Activated CD4-positive, alpha-beta memory T cell treated with anti-CD3 and anti-CD28 coated beads for 36 hours (primary cell): ENCODE measurements at regions of chr19 and their contacts with region 1.

Region 1: GRCh38 chr19:43438291-43439096 is 23.8 kb downstream of the TEX101 start:
- DNase-seq: peak; percentile 51
- H3K4me3 Mint-ChIP-seq: no peak overlapping the region
- H3K27ac Mint-ChIP-seq: peak overlapping the region; percentile 71
- H3K4me1 Mint-ChIP-seq: peaks cover 34% of the 10 kb centered on the region
- H3K27me3 Mint-ChIP-seq: no peaks in the 10 kb centered on the region

Region 2: DNA sequence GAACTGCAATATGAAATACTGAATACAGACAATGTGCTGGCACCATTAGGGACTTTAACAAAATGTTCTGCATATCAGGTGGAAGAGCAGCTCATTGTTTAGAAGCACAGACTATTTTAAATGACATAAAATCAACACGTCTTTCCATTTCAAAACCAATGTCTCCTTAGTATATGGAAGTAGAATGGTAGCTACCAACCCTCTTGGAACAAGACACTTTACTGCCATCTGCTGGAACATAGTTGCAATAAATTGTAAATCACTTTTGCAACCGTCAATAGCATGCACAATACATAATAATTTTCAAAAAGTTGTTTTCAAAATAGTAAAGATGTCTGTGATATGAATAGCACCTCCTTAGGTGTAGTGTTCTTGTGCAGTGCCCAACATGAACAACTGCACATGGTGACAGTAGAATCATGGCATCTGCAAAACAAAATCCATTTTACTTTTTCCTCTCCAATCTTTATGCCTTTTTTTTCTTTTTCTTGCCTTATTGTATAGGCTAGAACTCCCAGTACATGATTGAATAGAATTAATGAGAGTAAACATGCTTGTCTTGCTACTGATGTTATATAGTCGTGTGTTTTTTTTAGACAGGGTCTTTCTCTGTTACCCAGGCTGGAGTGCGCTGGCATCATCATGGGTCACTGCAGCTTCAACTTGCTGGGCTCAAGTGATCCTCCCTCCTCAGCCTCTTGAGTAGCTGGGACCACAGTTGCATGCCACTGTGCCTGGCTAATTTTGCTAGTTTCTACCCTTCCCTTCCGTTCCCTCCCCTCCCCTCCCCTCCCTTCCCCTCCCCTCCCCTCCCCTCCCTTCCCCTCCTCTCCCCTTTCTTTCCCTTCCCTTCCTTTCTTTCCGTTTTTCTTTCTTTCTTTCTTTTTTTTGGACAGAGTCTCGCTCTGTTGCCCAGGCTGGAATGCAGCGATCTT is 371.5 kb after region 1 on chr19:
- CTCF ChIA-PET with region 1: interaction called, 4 read pairs
- POLR2A ChIA-PET with region 1: no interaction called
- intact Hi-C with region 1: loop called (anchors 10 kb)
- DNase-seq: no peak
- H3K4me3 Mint-ChIP-seq: no peak overlapping the region
- H3K27ac Mint-ChIP-seq: no peak overlapping the region
- H3K4me1 Mint-ChIP-seq: peaks cover 6% of the 10 kb centered on the region
- H3K27me3 Mint-ChIP-seq: peaks cover 4% of the 10 kb centered on the region